Posterior vena cava (tissue), 2 donors: ENCODE measurements at regions of chr22 and their contacts with region 1.

Region 1: DNA sequence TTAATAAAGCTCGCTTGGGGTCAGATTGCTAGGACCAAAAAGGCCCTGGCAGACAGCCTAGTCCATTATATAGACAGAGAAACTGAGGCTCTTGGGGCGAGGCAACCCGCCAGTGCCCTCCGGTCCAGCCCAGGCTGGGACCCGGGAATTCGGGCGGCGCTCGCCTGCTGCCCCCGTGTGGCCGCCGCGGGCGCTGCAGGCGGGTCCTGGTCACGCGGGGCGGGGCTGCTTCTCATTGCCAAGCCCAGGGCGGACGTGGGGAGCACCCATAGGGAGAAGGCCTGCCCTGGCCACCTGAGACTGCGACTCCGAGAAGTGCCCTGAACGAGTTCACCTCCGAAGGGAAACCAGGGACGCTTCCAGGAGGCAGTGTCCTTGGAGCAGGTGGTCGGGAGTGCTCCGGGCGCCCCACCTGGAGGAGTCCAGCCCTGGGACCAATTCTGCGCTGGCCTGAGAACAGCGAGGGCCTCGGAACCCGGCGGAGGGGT is 36.0 kb upstream of the CSNK1E start:
- DNase-seq: peak; percentile 89

Region 2: DNA sequence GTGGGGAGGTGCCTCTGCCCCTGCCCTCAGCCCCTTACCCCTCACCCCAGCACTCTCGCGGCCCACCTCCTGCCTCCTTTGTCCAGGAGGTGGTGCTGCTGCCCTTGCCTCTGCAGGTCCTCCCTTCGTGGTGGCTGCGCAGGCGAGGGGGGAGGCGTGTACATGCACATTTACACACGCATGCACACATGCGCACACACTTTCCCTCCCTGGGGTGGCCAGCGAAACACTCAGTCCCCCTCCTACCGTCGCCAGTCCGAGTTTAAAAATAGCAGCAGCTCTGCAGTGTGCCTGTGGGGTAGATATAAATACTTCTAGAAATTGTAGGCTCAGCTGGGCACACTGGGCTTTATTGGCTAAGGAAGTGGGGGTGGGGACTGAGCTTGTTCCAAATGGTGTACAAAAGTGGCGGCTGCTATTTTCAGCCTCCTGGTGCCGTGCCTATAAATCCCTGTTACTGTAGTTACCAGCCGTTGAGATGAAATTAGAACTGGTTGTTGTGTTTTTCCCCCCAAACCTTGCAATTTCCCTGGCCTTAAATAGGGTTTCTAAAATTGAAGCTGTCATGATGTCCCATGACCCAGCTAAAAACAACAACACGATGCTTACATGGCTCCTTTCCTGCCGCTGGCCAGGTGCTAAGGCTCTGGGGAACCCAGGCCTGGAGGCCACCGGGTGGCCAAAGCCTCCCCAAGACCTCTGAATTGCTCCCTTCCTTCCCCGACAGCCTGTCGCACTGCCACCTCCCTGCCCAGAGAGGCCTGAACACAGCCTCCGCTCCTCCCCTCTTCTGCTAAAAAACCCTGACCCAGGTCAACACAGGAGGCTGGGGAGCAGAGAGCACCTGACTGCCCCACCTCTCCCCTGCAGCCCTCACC is 283.6 kb before region 1 on chr22:
- intact Hi-C with region 1: loop called in 1 of 2 experiments (anchors 10 kb)
- DNase-seq: peak; percentile 85

Region 3: DNA sequence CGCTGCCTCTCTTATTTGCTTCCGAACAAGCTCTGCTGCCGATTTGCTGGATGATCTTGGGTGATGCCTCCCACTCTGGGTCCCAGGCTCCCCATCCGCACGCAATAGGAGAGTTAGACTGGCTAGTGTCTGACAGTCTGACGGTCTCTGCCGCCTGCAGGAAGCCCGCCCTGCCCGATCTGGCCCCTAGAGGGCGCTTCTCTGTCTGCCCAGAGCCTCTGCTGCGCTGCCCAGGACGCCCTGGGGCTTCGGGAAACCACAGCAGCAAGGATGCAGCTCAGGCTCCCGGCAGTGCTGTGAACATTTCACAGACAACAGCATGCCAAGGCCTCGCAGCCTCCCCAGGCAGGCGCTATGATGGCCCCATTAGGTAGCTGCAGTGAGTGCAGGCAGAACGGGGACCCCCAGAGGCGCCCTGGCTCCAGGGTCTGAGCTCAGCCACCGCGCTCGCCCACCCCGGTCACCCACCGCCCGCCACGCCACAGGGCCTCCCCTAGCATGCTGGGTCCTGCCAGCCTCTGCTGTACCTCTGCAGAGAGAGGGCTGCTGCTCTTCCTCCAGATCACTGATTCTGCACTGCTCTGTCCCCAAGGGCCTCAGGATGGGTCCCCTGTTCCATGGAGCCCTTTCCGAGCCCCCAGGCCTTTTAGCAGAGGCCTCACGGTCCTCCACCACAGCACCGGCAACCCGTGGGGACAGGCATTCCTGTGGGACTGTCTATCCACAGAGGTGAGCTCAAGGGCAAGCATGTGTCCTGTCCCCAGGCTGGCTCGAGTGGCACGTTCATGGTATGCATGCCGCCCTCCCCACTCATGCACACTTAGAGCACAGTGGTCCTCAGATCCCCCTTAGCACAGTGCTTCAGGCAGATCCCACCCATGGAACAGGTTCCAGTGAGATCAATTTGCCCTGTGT is 238.4 kb before region 1 on chr22:
- intact Hi-C with region 1: loop called in 1 of 2 experiments (anchors 5 kb)
- DNase-seq: peak; percentile 96

Region 4: GRCh38 chr22:38262051-38262795 is 91.0 kb before region 1 on chr22:
- intact Hi-C with region 1: loop called in 1 of 2 experiments (anchors 10 kb)
- DNase-seq: no peak

Region 5: GRCh38 chr22:38291201-38291777 is 61.9 kb before region 1 on chr22:
- intact Hi-C with region 1: no loop called
- DNase-seq: no peak

Region 6: DNA sequence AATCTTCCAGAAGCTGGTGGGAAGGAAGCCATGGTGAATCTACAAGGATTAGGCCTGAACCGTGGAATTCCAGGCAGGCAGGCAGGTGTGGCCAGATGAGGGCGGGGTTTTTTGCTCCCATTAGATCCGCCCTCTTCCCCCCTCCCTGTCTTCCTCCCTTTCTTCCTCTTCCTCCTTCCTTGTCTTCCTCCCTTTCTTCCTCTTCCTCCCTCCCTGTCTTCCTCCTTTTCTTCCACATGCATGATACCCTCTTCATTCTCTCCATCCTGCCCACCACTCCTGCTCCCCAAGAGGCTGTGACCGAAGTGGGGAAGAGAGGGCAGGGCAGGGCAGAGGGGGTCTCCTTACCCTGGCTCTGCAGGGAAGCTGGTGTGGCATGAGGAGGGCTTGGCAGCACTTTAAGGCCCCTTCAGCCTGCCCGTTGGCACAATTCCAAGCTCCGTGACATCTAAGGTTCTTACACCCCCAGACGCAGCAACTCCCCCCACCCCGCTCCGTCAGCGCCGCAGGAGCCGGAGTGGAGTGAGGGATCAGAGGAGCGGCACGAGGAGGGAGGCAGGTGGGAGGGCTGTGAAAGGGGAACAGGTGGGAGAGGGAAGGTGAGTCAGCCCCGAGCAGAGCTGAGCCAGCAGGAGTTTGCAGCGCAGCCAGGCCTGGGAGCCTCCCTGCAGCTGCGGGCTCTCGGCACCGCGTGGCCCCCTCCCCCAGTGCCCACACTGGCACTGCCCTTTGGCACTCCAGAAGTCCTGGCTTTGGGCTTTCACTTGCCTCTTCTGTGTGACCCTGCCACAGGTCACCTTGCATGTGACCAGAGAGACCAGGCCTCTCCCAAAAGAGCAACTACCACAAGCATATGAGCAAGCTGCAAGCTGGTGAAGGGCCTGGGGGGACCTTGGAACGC is 69.7 kb after region 1 on chr22:
- intact Hi-C with region 1: no loop called
- DNase-seq: no peak